ENCODE measurements at regions of chr5 and their contacts with region 1.

Region 1: GRCh38 chr5:158739951-158740757 is 359.6 kb downstream of the EBF1 start:
- DNase-seq: no peak
- ATAC-seq: no peak
- H3K4me3 ChIP-seq: no peak overlapping the region
- H3K27ac ChIP-seq: no peak overlapping the region
- H3K4me1 ChIP-seq: no peaks in the 10 kb centered on the region
- H3K27me3 ChIP-seq: no peaks in the 10 kb centered on the region
- CTCF ChIP-seq: peak in 1 of 3 experiments; percentile 14; a peak in 2 of 6 replicates
- EP300 ChIP-seq: no peak
- POLR2A ChIP-seq: no peak
- RAD21 ChIP-seq: no peak

Region 2: DNA sequence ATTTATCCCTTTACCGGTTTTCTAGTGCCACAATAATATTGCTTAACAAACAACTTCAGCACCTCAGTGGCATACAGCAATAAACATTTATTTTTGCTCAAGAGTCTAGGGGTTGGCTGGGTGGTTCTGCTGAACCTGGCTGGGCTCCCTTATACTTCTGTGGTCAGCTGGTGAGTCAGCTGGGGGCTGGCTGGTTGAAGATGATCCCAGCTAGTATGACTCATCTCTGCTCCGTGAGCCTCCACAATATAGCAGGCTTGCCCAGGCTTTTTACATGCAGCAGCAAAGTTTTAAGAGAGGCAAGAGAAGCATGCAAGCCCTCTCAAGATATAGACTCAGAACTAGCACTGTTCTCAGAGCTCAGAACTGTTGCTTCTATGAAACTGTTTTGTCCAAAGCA is 357.7 kb before region 1 on chr5:
- CTCF ChIA-PET with region 1: no interaction called
- POLR2A ChIA-PET with region 1: no interaction called
- RAD21 ChIA-PET with region 1: no interaction called
- SMC1A ChIA-PET with region 1: no interaction called
- in situ Hi-C with region 1: no loop called
- intact Hi-C with region 1: no loop called
- DNase-seq: no peak
- ATAC-seq: peak; percentile 98
- H3K4me3 ChIP-seq: no peak overlapping the region
- H3K27ac ChIP-seq: no peak overlapping the region
- H3K4me1 ChIP-seq: no peaks in the 10 kb centered on the region; the same call in 1 of the 2 replicates
- H3K27me3 ChIP-seq: no peaks in the 10 kb centered on the region
- CTCF ChIP-seq: no peak
- EP300 ChIP-seq: 0 out of 4 replicates have a peak, but pooled peaks of 1 of the 2 experiments have one; percentile 22
- POLR2A ChIP-seq: no peak
- RAD21 ChIP-seq: no peak

Region 3: DNA sequence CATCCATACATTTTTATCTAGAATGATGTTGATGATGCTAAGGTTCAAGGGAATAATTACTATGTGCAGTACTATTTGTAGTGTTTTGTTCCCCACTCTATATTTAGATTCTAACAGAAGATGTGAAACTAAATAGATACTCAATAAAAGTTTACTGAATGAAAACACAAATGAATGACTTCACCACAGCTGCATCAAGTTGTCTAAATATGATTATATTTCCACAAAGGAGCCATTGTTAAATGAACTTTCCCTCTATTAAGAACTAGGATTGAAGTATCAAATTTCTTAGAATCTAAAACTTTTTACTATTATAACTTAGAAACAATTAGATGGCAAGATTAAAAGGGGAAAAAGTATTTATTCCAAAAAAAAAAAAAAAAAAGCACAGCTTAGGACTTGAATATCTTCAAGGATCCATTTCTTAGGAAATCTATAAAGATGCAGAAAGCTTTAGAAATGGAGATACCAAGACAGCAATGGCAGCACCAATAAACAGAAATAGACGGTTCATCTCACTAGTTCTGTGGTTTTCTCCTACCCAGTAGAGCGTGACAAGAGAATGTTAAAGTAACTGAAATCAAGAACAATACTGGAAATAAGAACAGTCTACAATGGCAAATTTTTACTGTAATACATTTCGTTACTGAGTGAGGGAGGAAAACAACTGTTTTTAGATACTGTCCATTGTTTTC is 12.0 kb after region 1 on chr5:
- CTCF ChIA-PET with region 1: interaction called, 4 read pairs
- POLR2A ChIA-PET with region 1: no interaction called
- RAD21 ChIA-PET with region 1: interaction called, 3 read pairs
- SMC1A ChIA-PET with region 1: interaction called, 15 read pairs
- in situ Hi-C with region 1: no loop called
- intact Hi-C with region 1: no loop called
- DNase-seq: peak; percentile 79
- ATAC-seq: peak; percentile 96
- H3K4me3 ChIP-seq: peak overlapping the region; percentile 0; the same call in 1 of the 2 replicates
- H3K27ac ChIP-seq: no peak overlapping the region
- H3K4me1 ChIP-seq: peaks cover 15% of the 10 kb centered on the region; the same call in 1 of the 2 replicates
- H3K27me3 ChIP-seq: no peaks in the 10 kb centered on the region
- CTCF ChIP-seq: no peak
- EP300 ChIP-seq: peak in 1 of 2 experiments; percentile 20; a peak in 1 of 4 replicates
- POLR2A ChIP-seq: no peak
- RAD21 ChIP-seq: no peak

Measured in GM12878 (cell line).